Activated CD4-positive, alpha-beta T cell treated with anti-CD3 and anti-CD28 coated beads for 36 hours (primary cell): ENCODE measurements at regions of chr15 and their contacts with region 1.

Region 1: DNA sequence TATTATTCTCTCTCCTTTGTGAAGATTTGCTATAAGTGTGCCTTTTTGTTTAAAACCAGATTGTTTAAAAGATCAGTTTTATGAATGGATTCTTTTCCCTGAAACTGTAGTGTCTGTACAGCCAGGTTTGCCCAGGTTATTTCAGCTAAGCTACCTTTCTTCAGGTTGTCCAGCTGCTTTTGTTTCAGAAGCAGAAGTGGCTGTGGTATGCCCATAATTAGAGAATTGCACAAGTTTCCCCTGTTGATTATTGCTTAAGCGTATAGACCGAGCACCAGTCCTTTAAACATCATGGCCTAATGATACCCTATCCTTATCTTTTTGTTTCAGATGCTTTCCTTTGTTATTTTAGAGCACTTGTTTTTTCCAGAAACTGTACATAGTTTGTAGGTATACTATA is 10.2 kb downstream of the ASB7 start:
- DNase-seq: no peak
- ATAC-seq: no peak
- H3K4me3 Mint-ChIP-seq: no peak overlapping the region
- H3K27ac Mint-ChIP-seq: no peak overlapping the region
- H3K4me1 Mint-ChIP-seq: peaks cover 3% of the 10 kb centered on the region
- H3K27me3 Mint-ChIP-seq: no peaks in the 10 kb centered on the region

Region 2: GRCh38 chr15:100468285-100468684 is 144.3 kb before region 1 on chr15:
- CTCF ChIA-PET with region 1: no interaction called
- POLR2A ChIA-PET with region 1: no interaction called
- intact Hi-C with region 1: no loop called
- DNase-seq: no peak
- ATAC-seq: no peak
- H3K4me3 Mint-ChIP-seq: no peak overlapping the region
- H3K27ac Mint-ChIP-seq: no peak overlapping the region
- H3K4me1 Mint-ChIP-seq: peaks cover 11% of the 10 kb centered on the region
- H3K27me3 Mint-ChIP-seq: no peaks in the 10 kb centered on the region

Region 3: GRCh38 chr15:100627789-100628395 is 15.4 kb after region 1 on chr15:
- CTCF ChIA-PET with region 1: interaction called, 10 read pairs
- POLR2A ChIA-PET with region 1: no interaction called
- intact Hi-C with region 1: no loop called
- DNase-seq: peak; percentile 72
- ATAC-seq: peak; percentile 84
- H3K4me3 Mint-ChIP-seq: no peak overlapping the region
- H3K27ac Mint-ChIP-seq: no peak overlapping the region
- H3K4me1 Mint-ChIP-seq: peaks cover 12% of the 10 kb centered on the region
- H3K27me3 Mint-ChIP-seq: no peaks in the 10 kb centered on the region

Region 4: GRCh38 chr15:100889385-100890050 is 277.0 kb after region 1 on chr15:
- CTCF ChIA-PET with region 1: no interaction called
- POLR2A ChIA-PET with region 1: no interaction called
- intact Hi-C with region 1: no loop called
- DNase-seq: no peak
- ATAC-seq: no peak
- H3K4me3 Mint-ChIP-seq: no peak overlapping the region
- H3K27ac Mint-ChIP-seq: no peak overlapping the region
- H3K4me1 Mint-ChIP-seq: peaks cover 2% of the 10 kb centered on the region
- H3K27me3 Mint-ChIP-seq: peaks cover 40% of the 10 kb centered on the region